ENCODE measurements at regions of chr2 and their contacts with region 1.

Region 1: GRCh38 chr2:73233154-73233931 is at the start of gene PRADC1:
- DNase-seq: peak; percentile 97
- ATAC-seq: peak; percentile 92
- H3K4me3 Mint-ChIP-seq: peak within 1 kb of the TSS; percentile 85
- H3K27ac Mint-ChIP-seq: peak within 1 kb of the TSS; percentile 83
- H3K4me1 Mint-ChIP-seq: peaks cover 35% of the 10 kb centered on the region
- H3K27me3 Mint-ChIP-seq: no peaks in the 10 kb centered on the region
- total RNA-seq, gene PRADC1: 19.0 to 19.1 TPM

Region 2: DNA sequence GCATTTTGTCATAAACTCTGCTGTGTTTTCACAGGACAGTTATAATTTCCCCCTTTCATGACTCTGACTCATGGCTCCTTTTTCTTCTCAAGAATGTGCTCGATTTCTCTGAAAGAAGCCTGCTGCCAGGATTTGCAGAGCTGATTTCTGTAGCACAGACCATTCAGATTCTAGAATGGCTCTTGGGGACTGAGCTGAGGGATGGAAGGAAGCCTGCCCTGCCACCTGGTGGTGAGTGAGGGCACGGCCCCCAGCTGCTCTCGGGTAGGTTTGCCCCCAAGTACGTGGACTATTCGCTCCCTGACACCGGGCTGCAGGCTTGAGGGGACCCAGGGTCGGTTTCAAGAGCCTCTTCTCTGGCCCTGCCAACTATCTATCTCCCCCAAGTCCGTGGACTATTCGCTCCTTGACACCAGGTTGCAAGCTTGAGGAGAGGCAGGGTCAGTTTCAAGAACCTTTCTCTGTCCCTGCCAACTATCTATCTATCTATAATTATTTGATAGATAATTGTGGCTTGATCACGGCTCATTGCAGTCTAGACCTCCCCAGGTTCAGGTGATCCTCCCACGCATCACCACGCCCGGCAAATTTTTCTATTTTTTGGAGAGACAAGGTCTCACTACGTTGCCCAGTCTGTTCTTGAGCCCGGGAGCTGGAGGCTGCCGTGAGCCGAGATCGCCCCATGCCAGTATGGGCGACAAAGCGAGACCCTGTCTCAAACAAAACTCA is 20.7 kb before region 1 on chr2:
- CTCF ChIA-PET with region 1: interaction called, 30 read pairs
- POLR2A ChIA-PET with region 1: interaction called, 21 read pairs
- DNase-seq: peak; percentile 83
- ATAC-seq: peak; percentile 73
- H3K4me3 Mint-ChIP-seq: peak overlapping the region; percentile 14
- H3K27ac Mint-ChIP-seq: no peak overlapping the region
- H3K4me1 Mint-ChIP-seq: peaks cover 28% of the 10 kb centered on the region
- H3K27me3 Mint-ChIP-seq: peaks cover 10% of the 10 kb centered on the region

Region 3: GRCh38 chr2:73218298-73218697 is 15.0 kb before region 1 on chr2:
- CTCF ChIA-PET with region 1: interaction called, 30 read pairs
- POLR2A ChIA-PET with region 1: interaction called, 21 read pairs
- DNase-seq: no peak
- ATAC-seq: no peak
- H3K4me3 Mint-ChIP-seq: no peak overlapping the region
- H3K27ac Mint-ChIP-seq: no peak overlapping the region
- H3K4me1 Mint-ChIP-seq: peaks cover 20% of the 10 kb centered on the region
- H3K27me3 Mint-ChIP-seq: no peaks in the 10 kb centered on the region

Region 4: GRCh38 chr2:73243884-73244570 is 10.7 kb after region 1 on chr2:
- CTCF ChIA-PET with region 1: interaction called, 6 read pairs
- POLR2A ChIA-PET with region 1: interaction called, 11 read pairs
- DNase-seq: no peak
- ATAC-seq: no peak
- H3K4me3 Mint-ChIP-seq: no peak overlapping the region
- H3K27ac Mint-ChIP-seq: peak overlapping the region; percentile 46
- H3K4me1 Mint-ChIP-seq: peaks cover 15% of the 10 kb centered on the region
- H3K27me3 Mint-ChIP-seq: no peaks in the 10 kb centered on the region

Region 5: GRCh38 chr2:73284296-73285158 is 51.2 kb after region 1 on chr2 and contains the start of gene FBXO41:
- CTCF ChIA-PET with region 1: interaction called, 43 read pairs
- POLR2A ChIA-PET with region 1: interaction called, 11 read pairs
- DNase-seq: peak; percentile 87
- ATAC-seq: peak; percentile 83
- H3K4me3 Mint-ChIP-seq: peak within 1 kb of the TSS; percentile 85
- H3K27ac Mint-ChIP-seq: peak within 1 kb of the TSS; percentile 84
- H3K4me1 Mint-ChIP-seq: peaks cover 28% of the 10 kb centered on the region
- H3K27me3 Mint-ChIP-seq: peaks cover 18% of the 10 kb centered on the region
- total RNA-seq, gene FBXO41: 32.0 to 32.3 TPM

Region 6: GRCh38 chr2:73290049-73290839 is 56.9 kb after region 1 on chr2:
- CTCF ChIA-PET with region 1: interaction called, 43 read pairs
- POLR2A ChIA-PET with region 1: interaction called, 11 read pairs
- DNase-seq: peak; percentile 76
- ATAC-seq: no peak
- H3K4me3 Mint-ChIP-seq: no peak overlapping the region
- H3K27ac Mint-ChIP-seq: no peak overlapping the region
- H3K4me1 Mint-ChIP-seq: peaks cover 29% of the 10 kb centered on the region
- H3K27me3 Mint-ChIP-seq: peaks cover 54% of the 10 kb centered on the region